Activated T-helper 1 cell treated with anti-CD3 and anti-CD28 coated beads, Interleukin-12 subunit alpha, Interleukin-12 subunit beta, Interleukin-2, Interleukin-4 antibody, amounts not matched to agents 30 ng/mL and 10 ng/mL and 1 ng/mL, durations not matched to agents 14 hours and 24 hours and 36 hours (primary cell): ENCODE measurements at regions of chr15 and their contacts with region 1.

Region 1: DNA sequence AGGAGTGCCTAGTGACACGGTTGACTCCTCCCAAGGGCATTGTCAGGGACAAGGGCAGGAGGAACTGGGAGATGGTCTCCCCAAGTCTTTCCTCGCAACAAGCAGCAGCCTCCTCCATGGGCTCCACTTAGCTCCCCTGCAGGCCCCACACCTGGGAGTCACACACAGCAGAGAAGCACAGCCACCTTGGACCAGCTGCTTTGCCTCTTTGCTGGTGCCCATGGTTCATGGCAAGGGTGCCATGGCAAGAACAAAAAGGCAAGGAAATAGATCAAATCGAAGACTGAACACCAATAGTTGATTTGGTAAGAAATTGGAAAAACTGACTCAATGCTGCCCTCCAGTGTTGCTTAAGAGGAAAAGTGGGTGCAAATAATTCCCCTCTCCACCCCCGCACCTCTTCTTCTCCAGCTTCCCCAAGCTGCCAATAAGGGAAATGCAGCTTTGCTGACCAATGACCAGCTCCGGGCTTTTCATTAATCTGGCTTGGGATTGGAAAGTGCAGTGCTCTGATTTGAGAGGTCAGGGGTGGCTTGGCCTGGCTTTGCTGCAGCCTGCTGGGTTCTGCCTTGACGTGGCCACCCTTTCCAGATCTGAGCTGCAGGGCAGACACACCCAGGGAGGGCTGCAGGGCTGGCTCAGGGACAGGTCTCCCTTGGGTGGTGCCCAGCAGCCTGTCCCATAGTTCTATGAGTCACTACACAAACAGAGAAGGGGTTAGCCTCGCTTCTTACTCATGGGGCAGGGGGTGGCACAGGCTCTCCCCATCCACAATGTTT is 162.0 kb downstream of the KLF13 start:
- DNase-seq: peak; percentile 29
- H3K4me3 Mint-ChIP-seq: peak overlapping the region; percentile 40
- H3K27ac Mint-ChIP-seq: peak overlapping the region; percentile 76
- H3K4me1 Mint-ChIP-seq: peaks cover 75% of the 10 kb centered on the region
- H3K27me3 Mint-ChIP-seq: no peaks in the 10 kb centered on the region

Region 2: GRCh38 chr15:31128919-31129768 is 359.5 kb before region 1 on chr15:
- intact Hi-C with region 1: loop called (anchors 1 kb)
- DNase-seq: peak; percentile 59
- H3K4me3 Mint-ChIP-seq: peak overlapping the region; percentile 11
- H3K27ac Mint-ChIP-seq: no peak overlapping the region
- H3K4me1 Mint-ChIP-seq: peaks cover 14% of the 10 kb centered on the region
- H3K27me3 Mint-ChIP-seq: peaks cover 11% of the 10 kb centered on the region

Region 3: DNA sequence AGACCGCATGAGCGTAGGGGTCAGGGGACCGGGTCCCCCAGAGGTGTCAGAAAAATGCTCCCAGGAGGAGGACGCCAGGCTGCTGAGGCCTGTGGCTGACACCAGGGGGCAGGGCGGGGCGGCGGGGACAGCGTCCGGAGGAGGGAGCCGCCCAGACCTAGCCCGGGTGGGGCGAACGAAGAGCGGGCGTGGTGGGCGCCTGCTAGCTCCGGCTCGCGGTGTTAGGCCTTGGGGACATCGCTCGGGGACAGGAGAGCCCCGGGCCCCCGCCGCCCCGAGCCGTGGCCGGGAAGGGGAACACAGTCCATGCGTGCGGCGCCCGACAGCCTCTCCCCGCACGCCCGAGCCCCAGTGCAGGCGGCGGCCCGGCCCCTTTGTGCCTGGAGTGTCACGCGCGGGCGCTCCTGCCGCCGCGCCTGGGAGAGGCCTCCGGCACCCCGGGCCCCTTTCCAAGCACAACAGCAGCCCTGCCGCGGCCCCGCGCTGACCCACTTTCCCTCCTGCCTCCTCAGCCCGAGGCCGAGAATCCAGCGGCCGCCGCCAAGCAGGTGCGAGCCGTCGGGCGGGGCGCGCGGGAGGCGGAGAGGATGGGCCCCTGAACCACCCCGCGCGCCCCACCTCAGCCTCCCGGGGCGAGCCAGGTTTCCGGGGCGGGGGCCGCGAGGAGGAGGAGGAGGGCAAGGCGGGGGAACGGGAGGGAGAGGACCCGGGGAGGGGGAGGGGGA is 273.0 kb before region 1 on chr15:
- intact Hi-C with region 1: loop called (anchors 1 kb)
- DNase-seq: peak; percentile 76
- H3K4me3 Mint-ChIP-seq: peak overlapping the region; percentile 79
- H3K27ac Mint-ChIP-seq: peak overlapping the region; percentile 73
- H3K4me1 Mint-ChIP-seq: peaks cover 48% of the 10 kb centered on the region
- H3K27me3 Mint-ChIP-seq: no peaks in the 10 kb centered on the region

Region 4: DNA sequence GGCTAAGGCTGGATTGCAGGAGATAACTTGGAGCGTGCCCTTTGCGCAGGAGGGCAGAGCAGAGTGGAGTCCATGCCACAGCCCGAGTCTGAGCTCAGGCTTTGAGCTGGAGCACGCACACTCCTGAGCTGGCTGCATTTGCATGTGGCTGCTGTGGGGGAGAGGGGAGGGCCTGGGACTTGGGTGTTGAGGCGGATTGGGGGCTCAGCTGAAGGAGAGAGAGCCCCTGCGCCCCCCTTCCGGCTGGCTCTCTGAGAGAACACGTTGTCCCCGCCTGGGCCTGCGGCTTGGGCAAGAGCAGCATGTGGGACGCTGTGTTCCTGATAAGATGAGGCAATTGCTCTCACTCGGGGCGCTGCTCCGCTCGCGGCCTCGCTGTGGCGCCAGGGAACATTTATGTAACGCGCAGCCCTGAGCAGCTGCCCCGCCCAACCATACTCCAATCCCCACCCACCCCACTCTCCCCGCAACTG is 122.9 kb before region 1 on chr15:
- intact Hi-C with region 1: loop called (anchors 1 kb)
- DNase-seq: peak; percentile 69
- H3K4me3 Mint-ChIP-seq: peak overlapping the region; percentile 77
- H3K27ac Mint-ChIP-seq: peak overlapping the region; percentile 99
- H3K4me1 Mint-ChIP-seq: peaks cover 97% of the 10 kb centered on the region
- H3K27me3 Mint-ChIP-seq: no peaks in the 10 kb centered on the region

Region 5: DNA sequence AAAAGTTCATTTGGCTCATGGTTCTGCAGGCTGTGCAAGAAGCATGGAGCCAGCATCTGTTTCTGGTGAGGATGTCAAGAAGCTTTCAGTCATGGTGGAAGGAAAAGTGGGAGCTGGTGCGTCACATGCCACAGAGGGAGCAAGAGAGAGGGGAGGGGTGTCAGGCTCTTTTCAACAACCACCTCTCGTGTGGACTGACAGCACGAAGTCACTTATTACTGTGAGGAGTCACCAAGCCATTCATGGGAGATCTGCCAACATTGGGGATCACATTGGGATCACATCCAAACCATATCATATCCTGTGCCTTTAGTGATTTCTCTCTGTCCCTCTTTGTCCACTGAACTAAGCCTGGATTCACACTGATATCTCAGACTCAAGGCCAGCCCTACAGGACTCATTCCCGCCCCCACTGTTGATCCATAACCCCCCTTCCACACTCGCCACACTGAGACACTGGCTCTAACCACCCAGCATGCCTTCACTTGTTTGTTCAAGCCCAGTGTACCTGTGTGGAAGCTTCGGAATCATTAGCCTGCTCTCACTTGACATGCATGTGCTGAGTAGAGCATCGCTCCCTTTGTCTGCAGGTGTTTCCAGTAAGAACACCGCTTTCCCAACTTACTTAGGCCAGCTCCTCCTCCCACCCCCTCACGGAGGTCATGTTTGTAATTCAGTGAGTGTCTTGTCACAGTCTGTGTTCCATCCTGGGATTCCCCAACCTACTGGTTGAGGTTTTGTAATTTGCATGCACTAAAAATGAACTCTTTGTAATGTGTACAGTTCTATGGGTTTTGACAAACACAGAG is 29.8 kb before region 1 on chr15:
- intact Hi-C with region 1: loop called (anchors 1 kb)
- DNase-seq: peak; percentile 57
- H3K4me3 Mint-ChIP-seq: peak overlapping the region; percentile 53
- H3K27ac Mint-ChIP-seq: peak overlapping the region; percentile 86
- H3K4me1 Mint-ChIP-seq: peaks cover 38% of the 10 kb centered on the region
- H3K27me3 Mint-ChIP-seq: no peaks in the 10 kb centered on the region

Region 6: GRCh38 chr15:31511707-31512310 is 23.2 kb after region 1 on chr15:
- intact Hi-C with region 1: loop called (anchors 2 kb)
- DNase-seq: peak; percentile 69
- H3K4me3 Mint-ChIP-seq: peak overlapping the region; percentile 68
- H3K27ac Mint-ChIP-seq: peak overlapping the region; percentile 55
- H3K4me1 Mint-ChIP-seq: peaks cover 72% of the 10 kb centered on the region
- H3K27me3 Mint-ChIP-seq: peaks cover 5% of the 10 kb centered on the region

Region 7: GRCh38 chr15:32757426-32757825 is 1268.8 kb after region 1 on chr15:
- intact Hi-C with region 1: no loop called
- DNase-seq: no peak
- H3K4me3 Mint-ChIP-seq: no peak overlapping the region
- H3K27ac Mint-ChIP-seq: no peak overlapping the region
- H3K4me1 Mint-ChIP-seq: no peaks in the 10 kb centered on the region
- H3K27me3 Mint-ChIP-seq: peaks cover 19% of the 10 kb centered on the region